Heart left ventricle (tissue), 16 donors: ENCODE measurements at regions of chr11 and their contacts with region 1.

Region 1: GRCh38 chr11:5624489-5625279 is at the start of gene TRIM34:
- DNase-seq: peak in 4 of 5 donors; percentile 36 to 61 (median 47)
- ATAC-seq: peak; percentile 81 to 97 (median 95)
- H3K4me3 ChIP-seq: peak within 1 kb of the TSS; percentile 0 to 83 (median 60)
- H3K27ac ChIP-seq: peak within 1 kb of the TSS; percentile 30 to 88 (median 74)
- H3K4me1 ChIP-seq: peaks cover 0 to 38% (median 18%) of the 10 kb centered on the region in 12 donors
- H3K27me3 ChIP-seq: no peaks in the 10 kb centered on the region
- CTCF ChIP-seq: no peak
- POLR2A ChIP-seq: no peak
- total RNA-seq, gene TRIM34: 1.3 to 9.1 (median 1.6) TPM

Region 2: DNA sequence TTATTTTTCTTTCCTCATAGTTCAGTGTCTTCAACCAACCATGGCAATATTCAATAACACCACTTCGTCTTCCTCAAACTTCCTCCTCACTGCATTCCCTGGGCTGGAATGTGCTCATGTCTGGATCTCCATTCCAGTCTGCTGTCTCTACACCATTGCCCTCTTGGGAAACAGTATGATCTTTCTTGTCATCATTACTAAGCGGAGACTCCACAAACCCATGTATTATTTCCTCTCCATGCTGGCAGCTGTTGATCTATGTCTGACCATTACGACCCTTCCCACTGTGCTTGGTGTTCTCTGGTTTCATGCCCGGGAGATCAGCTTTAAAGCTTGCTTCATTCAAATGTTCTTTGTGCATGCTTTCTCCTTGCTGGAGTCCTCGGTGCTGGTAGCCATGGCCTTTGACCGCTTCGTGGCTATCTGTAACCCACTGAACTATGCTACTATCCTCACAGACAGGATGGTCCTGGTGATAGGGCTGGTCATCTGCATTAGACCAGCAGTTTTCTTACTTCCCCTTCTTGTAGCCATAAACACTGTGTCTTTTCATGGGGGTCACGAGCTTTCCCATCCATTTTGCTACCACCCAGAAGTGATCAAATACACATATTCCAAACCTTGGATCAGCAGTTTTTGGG is 742.7 kb before region 1 on chr11 and contains the start of gene OR51T1:
- intact Hi-C with region 1: no loop called
- DNase-seq: no peak
- ATAC-seq: no peak
- H3K4me3 ChIP-seq: no peak within 1 kb of the TSS
- H3K27ac ChIP-seq: no peak within 1 kb of the TSS
- H3K4me1 ChIP-seq: no peaks in the 10 kb centered on the region
- H3K27me3 ChIP-seq: no peaks in the 10 kb centered on the region
- CTCF ChIP-seq: no peak
- POLR2A ChIP-seq: no peak
- total RNA-seq, gene OR51T1: not detected

Region 3: GRCh38 chr11:5452712-5453111 is 172.0 kb before region 1 on chr11:
- intact Hi-C with region 1: no loop called
- DNase-seq: no peak
- ATAC-seq: no peak
- H3K4me3 ChIP-seq: no peak overlapping the region
- H3K27ac ChIP-seq: no peak overlapping the region
- H3K4me1 ChIP-seq: no peaks in the 10 kb centered on the region
- H3K27me3 ChIP-seq: no peaks in the 10 kb centered on the region
- CTCF ChIP-seq: no peak
- POLR2A ChIP-seq: no peak

Region 4: GRCh38 chr11:5684646-5685362 is 60.1 kb after region 1 on chr11 and contains the start of gene TRIM5:
- intact Hi-C with region 1: loop called in 5 of 10 experiments (anchors 5 to 10 kb)
- DNase-seq: peak; percentile 87 to 91 (median 89)
- ATAC-seq: peak; percentile 97 to 99 (median 98)
- H3K4me3 ChIP-seq: peak within 1 kb of the TSS; percentile 25 to 68 (median 52)
- H3K27ac ChIP-seq: peak within 1 kb of the TSS; percentile 74 to 96 (median 86)
- H3K4me1 ChIP-seq: peaks cover 0 to 31% (median 17%) of the 10 kb centered on the region in 12 donors
- H3K27me3 ChIP-seq: no peaks in the 10 kb centered on the region
- CTCF ChIP-seq: peak; percentile 35 to 74 (median 54)
- POLR2A ChIP-seq: peak in 1 of 2 donors; percentile 88
- total RNA-seq, gene TRIM5: 7.5 to 15.9 (median 8.9) TPM

Region 5: DNA sequence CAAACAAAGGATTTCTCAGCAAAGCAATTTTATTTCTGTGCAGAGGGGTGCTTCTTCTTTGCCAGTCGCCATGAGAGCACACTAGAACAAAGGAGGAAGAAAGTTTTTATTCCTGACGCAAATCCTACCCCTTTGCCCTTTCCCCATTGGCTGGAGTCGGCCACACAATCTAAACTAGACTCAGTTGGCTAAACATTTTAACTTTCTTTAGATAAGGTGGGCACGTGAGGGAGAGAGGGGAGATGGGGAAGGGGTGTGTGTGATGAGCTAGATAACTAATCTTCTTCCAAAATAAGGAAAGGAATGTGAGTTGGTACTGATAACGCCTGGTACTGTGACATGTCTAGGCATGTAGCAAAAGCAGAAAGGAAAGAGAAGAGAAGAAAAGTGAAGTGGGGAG is 65.5 kb after region 1 on chr11:
- intact Hi-C with region 1: loop called in 5 of 10 experiments (anchors 5 to 10 kb)
- DNase-seq: peak in 2 of 5 donors; percentile 27 to 48
- ATAC-seq: peak; percentile 62 to 76 (median 72)
- H3K4me3 ChIP-seq: peak overlapping the region; percentile 11 to 77 (median 58)
- H3K27ac ChIP-seq: peak overlapping the region; percentile 77 to 99 (median 88)
- H3K4me1 ChIP-seq: peaks cover 0 to 48% (median 13%) of the 10 kb centered on the region in 12 donors
- H3K27me3 ChIP-seq: no peaks in the 10 kb centered on the region
- CTCF ChIP-seq: no peak
- POLR2A ChIP-seq: no peak